ENCODE measurements at regions of chr17 and their contacts with region 1.

Region 1: DNA sequence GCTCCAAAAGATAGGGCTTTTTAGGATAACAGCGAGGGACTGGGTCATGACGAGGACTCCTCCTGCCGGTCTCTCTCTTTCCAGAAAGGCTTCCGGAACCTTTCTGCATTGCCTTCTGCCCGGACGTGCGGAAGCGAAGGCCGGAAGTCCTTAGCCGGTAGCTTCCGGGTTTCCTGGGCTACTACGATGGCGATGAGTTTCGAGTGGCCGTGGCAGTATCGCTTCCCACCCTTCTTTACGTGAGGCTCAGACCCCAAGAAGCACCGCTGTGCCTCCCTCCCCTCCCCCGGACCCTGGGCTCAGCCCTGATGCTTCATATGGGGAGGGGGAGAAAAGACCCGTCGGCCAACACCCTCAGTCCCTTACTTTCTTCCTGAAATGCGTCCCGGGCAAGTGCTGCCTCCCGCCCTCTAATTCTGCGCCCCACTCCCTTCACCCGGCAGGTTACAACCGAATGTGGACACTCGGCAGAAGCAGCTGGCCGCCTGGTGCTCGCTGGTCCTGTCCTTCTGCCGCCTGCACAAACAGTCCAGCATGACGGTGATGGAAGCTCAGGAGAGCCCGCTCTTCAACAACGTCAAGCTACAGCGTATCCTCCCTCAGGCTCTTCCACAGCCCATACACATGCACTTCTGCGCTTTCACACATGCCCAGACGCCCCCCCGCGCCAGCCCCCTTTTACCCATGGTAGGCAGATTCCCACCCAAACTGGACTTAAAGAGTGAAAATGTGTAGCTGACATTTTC is at the start of gene VPS25:
- DNase-seq: peak; percentile 65 to 74
- H3K4me3 ChIP-seq: peak within 1 kb of the TSS; percentile 98
- H3K27ac ChIP-seq: peak within 1 kb of the TSS; percentile 88
- H3K4me1 ChIP-seq: peaks cover 14% of the 10 kb centered on the region
- H3K27me3 ChIP-seq: no peaks in the 10 kb centered on the region
- CTCF ChIP-seq: no peak
- total RNA-seq, gene VPS25: 38.7 and 48.4 TPM in 2 replicates

Region 2: GRCh38 chr17:41885733-41886132 is 887.7 kb before region 1 on chr17:
- CTCF ChIA-PET with region 1: interaction called, 16 read pairs
- POLR2A ChIA-PET with region 1: no interaction called
- intact Hi-C with region 1: no loop called
- DNase-seq: no peak
- H3K4me3 ChIP-seq: no peak overlapping the region
- H3K27ac ChIP-seq: no peak overlapping the region
- H3K4me1 ChIP-seq: no peaks in the 10 kb centered on the region
- H3K27me3 ChIP-seq: no peaks in the 10 kb centered on the region
- CTCF ChIP-seq: peak; percentile 56; the same call in 1 of the 2 replicates